GM10248 (cell line): ENCODE measurements at regions of chr18 and their contacts with region 1.

Region 1: DNA sequence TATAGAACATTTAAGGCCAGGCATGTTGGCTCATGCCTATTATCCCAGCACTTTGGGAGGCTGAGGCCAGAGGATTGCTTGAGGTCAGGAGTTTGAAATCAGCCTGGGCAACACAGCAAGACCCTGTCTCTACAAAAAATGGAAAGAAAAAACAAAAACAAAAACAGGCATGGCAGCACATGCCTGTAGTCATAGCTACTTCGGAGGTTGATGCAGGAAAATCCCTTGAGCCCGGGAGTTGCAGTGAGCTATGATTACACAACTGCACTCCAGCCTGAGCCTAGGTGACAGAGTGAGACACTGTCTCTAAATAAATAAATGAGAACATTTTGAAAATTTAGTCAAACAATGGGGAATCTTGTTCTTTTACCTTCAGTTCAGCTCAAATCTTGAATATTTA is 12.1 kb upstream of the YES1 start:
- DNase-seq: no peak
- CTCF ChIP-seq: no peak

Region 2: DNA sequence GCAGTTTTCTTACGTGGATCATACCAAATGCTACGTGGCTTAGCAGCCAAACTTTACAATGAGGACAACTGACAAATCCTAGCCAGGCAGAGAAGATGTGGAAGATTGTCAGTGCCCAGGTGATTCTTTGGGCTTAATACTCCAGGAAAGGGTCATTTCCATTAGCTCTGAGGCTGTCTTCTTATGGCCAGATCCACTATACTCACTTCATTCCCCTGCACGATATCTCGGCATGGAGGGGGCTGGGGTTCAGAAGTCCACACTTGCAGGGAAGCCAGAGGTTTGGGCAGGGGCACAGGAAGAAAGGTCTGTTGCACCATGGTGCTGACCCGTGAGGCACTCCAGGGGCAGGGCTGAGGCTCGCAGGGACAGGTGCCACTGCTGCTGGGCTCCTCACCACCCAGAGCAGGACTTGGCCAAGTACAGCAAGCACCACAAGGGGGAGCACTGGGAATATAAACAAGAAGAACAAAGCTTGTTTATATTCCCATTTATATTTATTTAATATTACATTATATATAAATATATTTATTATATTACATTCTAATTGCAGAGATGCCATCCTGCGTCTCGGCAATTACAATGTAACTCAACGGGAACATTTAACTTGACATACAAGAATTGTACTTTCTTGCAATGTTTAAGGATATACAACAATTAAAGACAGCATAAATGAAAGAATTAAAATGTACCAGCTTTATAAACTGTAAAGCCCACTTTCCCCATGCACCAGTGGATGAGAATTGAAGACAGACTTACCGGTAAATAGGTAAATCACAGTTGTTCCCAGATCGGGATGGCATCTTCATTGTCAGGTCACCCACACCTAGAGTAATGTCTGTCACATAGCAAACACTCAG is 200.2 kb before region 1 on chr18:
- CTCF ChIA-PET with region 1: interaction called, 229 read pairs
- POLR2A ChIA-PET with region 1: no interaction called
- DNase-seq: peak; percentile 55
- CTCF ChIP-seq: peak; percentile 73